ENCODE measurements at regions of chr19 and their contacts with region 1.

Region 1: DNA sequence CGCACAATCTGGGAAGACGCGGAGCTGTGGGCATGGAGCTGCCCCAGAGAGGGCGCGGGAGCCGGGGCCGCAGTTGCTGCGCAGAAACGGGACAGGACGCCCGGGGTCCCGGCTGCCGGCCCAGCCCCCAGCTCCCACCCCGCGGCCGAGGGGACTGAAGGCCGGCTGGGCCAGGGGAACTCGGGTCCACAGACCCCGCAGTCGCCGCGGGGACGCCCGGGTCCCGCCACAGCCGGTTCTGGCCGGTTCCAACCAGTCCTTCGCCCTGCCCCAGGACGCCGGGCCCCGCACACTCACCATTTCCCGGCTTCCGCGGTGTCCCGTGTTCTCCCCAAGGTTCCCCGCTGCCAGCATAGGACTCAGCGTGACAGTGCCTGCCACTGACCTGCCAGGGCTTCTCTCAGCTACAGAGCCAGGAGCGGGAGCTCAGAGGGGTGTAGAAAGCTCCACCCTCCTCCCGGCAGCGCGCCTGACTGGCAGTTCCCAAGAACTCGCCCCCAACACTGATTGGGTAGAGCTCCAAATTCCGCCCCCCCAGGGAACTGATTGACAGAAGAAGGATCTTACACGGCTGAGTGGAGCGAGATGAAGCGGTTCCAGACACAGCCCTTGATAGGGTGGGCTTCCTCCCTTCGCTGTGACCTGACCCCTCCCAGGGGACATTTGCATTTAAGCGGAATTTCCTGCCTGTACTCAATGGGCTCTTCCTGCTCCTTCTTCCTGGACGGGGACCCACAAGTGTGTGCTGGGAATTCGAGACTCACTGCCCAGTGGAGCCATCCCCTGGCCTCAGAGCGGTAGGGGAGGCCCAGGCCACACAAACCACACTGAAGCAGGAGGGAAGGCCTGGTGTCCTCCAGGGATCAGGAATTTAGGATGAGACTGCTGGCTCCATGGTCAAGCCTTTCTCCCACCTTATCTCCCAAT is at the start of gene ZNF442:
- DNase-seq: peak; percentile 97
- ATAC-seq: peak; percentile 99
- total RNA-seq, gene ZNF442: 2.3 TPM

Region 2: GRCh38 chr19:12294249-12295158 is 71.0 kb before region 1 on chr19 and contains the start of gene ZNF44:
- intact Hi-C with region 1: loop called (anchors 10 kb)
- DNase-seq: peak; percentile 99
- ATAC-seq: peak; percentile 99
- total RNA-seq, gene ZNF44: 8.6 TPM

Region 3: GRCh38 chr19:12453491-12453890 is 88.0 kb after region 1 on chr19:
- intact Hi-C with region 1: no loop called
- DNase-seq: no peak
- ATAC-seq: no peak